ENCODE measurements at regions of chr4 and their contacts with region 1.

Region 1: DNA sequence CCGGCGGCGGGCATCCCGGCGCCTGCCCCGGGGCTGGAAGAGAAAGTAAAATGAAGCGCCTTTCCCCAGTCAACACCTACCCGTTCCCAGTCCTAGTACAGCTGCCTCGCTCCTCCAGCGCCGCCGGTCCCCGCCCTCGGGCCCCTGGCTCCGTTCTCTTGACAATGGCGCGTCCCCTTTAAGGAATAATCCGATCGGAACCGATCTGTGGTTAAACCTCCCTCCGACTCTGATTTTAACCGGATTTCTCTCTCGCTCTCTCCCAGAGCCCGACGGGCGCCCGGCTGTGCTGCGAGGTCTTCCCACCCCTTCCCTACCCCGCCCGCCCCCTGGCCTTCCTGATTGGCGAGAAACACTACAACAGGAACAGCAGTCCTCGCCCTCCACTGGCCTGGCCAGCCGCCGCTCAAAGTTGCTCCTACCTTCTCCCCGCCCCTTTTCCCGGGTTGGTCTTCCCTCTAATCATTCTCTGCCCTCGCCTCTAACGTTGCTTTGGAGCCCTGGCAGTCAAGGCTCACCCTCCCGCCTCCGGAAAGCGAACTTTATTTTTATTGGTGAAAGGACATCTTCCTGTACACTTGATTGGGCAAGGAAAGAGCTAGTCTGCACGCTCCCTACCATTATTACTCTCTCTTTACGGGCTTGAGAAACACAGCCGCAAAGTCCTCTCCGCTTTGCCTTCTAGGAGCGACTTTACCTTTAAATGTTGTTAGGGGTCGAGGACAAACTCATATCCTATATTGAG is at the start of gene FRYL:
- DNase-seq: peak; percentile 98 to 99
- H3K4me3 ChIP-seq: peak within 1 kb of the TSS; percentile 96
- H3K4me3 Mint-ChIP-seq: peak within 1 kb of the TSS; percentile 95
- H3K27ac Mint-ChIP-seq: peak within 1 kb of the TSS; percentile 94
- H3K4me1 ChIP-seq: no peaks in the 10 kb centered on the region
- H3K4me1 Mint-ChIP-seq: no peaks in the 10 kb centered on the region
- H3K27me3 ChIP-seq: no peaks in the 10 kb centered on the region
- H3K27me3 Mint-ChIP-seq: no peaks in the 10 kb centered on the region
- CTCF ChIP-seq: no peak
- total RNA-seq, gene FRYL: 27.4 and 40.5 TPM in 2 replicates

Region 2: GRCh38 chr4:48623182-48623780 is 156.9 kb before region 1 on chr4:
- CTCF ChIA-PET with region 1: no interaction called
- POLR2A ChIA-PET with region 1: no interaction called
- intact Hi-C with region 1: loop called (anchors 5 kb)
- DNase-seq: peak; percentile 52 to 68
- H3K4me3 ChIP-seq: no peak overlapping the region
- H3K4me3 Mint-ChIP-seq: no peak overlapping the region
- H3K27ac Mint-ChIP-seq: no peak overlapping the region
- H3K4me1 ChIP-seq: peaks cover 9% of the 10 kb centered on the region
- H3K4me1 Mint-ChIP-seq: peaks cover 13% of the 10 kb centered on the region
- H3K27me3 ChIP-seq: no peaks in the 10 kb centered on the region
- H3K27me3 Mint-ChIP-seq: no peaks in the 10 kb centered on the region
- CTCF ChIP-seq: no peak

Region 3: GRCh38 chr4:48704091-48704801 is 75.9 kb before region 1 on chr4:
- CTCF ChIA-PET with region 1: no interaction called
- POLR2A ChIA-PET with region 1: no interaction called
- intact Hi-C with region 1: loop called (anchors 5 kb)
- DNase-seq: no peak
- H3K4me3 ChIP-seq: no peak overlapping the region
- H3K4me3 Mint-ChIP-seq: no peak overlapping the region
- H3K27ac Mint-ChIP-seq: no peak overlapping the region
- H3K4me1 ChIP-seq: peaks cover 24% of the 10 kb centered on the region
- H3K4me1 Mint-ChIP-seq: peaks cover 8% of the 10 kb centered on the region
- H3K27me3 ChIP-seq: no peaks in the 10 kb centered on the region
- H3K27me3 Mint-ChIP-seq: no peaks in the 10 kb centered on the region
- CTCF ChIP-seq: no peak

Region 4: DNA sequence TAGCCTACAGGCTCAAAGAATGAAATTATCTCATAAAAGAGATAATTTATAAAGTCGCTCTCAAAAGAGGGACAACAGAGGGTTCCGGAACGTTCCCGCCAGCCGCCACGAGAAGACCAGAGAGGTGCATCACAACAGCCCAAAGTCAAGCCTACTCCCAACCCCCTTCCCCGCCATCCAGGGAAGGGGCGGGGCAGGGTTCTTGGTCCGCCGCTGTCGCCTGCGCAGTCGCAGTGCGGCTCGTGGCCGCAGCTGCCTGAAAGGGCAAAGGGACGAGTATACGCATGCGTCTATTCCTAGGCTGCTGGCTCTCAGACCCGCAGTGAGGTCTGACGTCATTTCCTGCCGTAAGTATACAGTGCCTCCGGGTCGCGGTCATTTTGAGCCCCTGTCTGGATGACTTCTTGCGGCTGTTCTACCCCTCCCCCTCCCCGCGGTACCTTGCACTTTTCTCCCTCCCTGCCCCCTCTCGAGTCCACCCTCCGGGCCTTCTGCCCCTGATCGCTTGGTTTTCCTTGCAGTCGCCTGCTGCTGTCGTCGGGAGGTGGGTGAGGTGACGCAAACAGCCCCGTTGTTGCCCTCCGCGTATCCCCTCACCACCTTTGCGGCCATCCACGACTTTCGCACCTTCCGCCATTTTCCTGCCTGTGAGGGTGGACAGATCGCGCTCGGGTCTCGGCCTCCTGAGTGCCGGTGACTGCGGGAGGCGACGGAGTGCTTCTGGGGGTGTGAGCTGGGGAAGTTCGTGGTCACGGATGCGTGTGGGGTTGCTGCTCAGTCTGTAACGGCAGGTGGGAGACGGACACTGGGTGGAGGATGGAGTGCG is 50.7 kb after region 1 on chr4 and contains the start of gene OCIAD1:
- CTCF ChIA-PET with region 1: no interaction called
- POLR2A ChIA-PET with region 1: interaction called, 3 read pairs
- intact Hi-C with region 1: loop called (anchors 1 kb)
- DNase-seq: peak; percentile 96 to 98
- H3K4me3 ChIP-seq: peak within 1 kb of the TSS; percentile 97
- H3K4me3 Mint-ChIP-seq: peak within 1 kb of the TSS; percentile 98
- H3K27ac Mint-ChIP-seq: peak within 1 kb of the TSS; percentile 99
- H3K4me1 ChIP-seq: no peaks in the 10 kb centered on the region
- H3K4me1 Mint-ChIP-seq: peaks cover 8% of the 10 kb centered on the region
- H3K27me3 ChIP-seq: no peaks in the 10 kb centered on the region
- H3K27me3 Mint-ChIP-seq: no peaks in the 10 kb centered on the region
- CTCF ChIP-seq: no peak
- total RNA-seq, gene OCIAD1: 121 and 133 TPM in 2 replicates

Region 5: DNA sequence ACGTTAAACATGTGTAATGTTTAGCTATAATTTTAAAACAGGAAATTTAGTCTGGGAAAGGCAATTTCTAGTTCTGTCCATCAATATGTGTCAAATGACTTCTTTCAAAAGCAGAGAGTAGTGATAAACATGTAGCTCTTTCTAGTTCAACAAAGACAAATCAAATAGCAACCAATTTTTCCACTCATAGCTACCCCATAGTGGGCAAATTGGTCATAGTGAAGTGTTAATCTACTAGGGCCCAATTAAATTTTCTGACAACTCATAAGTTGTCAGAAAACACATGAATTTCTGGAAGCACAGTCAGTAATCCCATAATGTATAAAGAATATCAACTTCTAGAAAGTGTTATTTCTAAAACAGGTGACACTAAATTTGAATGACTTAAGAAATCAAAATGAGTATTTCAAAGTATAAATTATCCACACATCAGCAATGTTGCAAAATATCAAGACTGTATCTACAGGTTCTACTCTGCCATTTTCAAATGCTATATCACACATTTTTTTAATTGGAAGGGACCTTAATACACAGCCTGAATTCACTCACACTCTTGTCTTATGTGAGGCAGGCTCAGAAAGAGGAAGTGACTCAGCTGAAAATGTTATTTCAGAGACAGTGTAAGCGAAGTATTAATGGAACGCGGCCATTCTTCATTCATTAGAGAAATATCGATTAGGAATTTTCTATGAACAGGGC is 118.7 kb after region 1 on chr4:
- CTCF ChIA-PET with region 1: no interaction called
- POLR2A ChIA-PET with region 1: no interaction called
- intact Hi-C with region 1: no loop called
- DNase-seq: no peak
- H3K4me3 ChIP-seq: no peak overlapping the region
- H3K4me3 Mint-ChIP-seq: no peak overlapping the region
- H3K27ac Mint-ChIP-seq: no peak overlapping the region
- H3K4me1 ChIP-seq: no peaks in the 10 kb centered on the region
- H3K4me1 Mint-ChIP-seq: no peaks in the 10 kb centered on the region
- H3K27me3 ChIP-seq: no peaks in the 10 kb centered on the region
- H3K27me3 Mint-ChIP-seq: no peaks in the 10 kb centered on the region
- CTCF ChIP-seq: no peak

Measured in Caco-2 (cell line).